ENCODE measurements at regions of chr2 and their contacts with region 1.

Region 1: GRCh38 chr2:12048550-12048949 is 302.1 kb downstream of the LPIN1 start:
- DNase-seq: peak; percentile 35
- ATAC-seq: peak; percentile 95
- H3K4me3 Mint-ChIP-seq: no peak overlapping the region
- H3K27ac Mint-ChIP-seq: no peak overlapping the region
- H3K4me1 Mint-ChIP-seq: peaks cover 16% of the 10 kb centered on the region
- H3K27me3 Mint-ChIP-seq: no peaks in the 10 kb centered on the region
- CTCF ChIP-seq: no peak

Region 2: DNA sequence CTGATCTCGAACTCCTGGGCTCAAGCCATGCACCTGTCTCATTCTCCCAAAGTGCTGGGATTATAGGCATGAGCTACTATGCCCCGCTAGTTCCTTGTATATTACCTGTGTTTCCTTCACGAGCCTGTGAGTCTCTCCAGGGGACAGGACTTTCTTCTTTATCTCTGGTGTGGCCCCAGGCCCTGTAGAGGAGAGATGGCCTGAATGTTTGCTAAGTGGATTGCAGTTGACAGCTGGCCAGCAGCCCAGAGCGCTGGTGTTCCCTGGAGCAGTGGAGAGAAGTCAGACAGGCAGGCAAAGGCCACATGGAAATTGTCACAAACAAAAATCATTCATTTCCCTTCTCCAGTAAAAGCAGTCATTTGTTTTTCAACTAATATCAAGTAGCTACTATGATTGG is 284.2 kb before region 1 on chr2:
- CTCF ChIA-PET with region 1: no interaction called
- POLR2A ChIA-PET with region 1: no interaction called
- DNase-seq: no peak
- ATAC-seq: no peak
- H3K4me3 Mint-ChIP-seq: no peak overlapping the region
- H3K27ac Mint-ChIP-seq: 0 out of 2 replicates have a peak overlapping the region, but pooled peaks have one; percentile 27
- H3K4me1 Mint-ChIP-seq: peaks cover 19% of the 10 kb centered on the region
- H3K27me3 Mint-ChIP-seq: no peaks in the 10 kb centered on the region
- CTCF ChIP-seq: no peak

Region 3: GRCh38 chr2:11863513-11864328 is 184.8 kb before region 1 on chr2:
- CTCF ChIA-PET with region 1: interaction called, 16 read pairs
- POLR2A ChIA-PET with region 1: no interaction called
- DNase-seq: peak; percentile 86
- ATAC-seq: peak; percentile 94
- H3K4me3 Mint-ChIP-seq: no peak overlapping the region
- H3K27ac Mint-ChIP-seq: no peak overlapping the region; the same call in 1 of the 2 replicates
- H3K4me1 Mint-ChIP-seq: peaks cover 28% of the 10 kb centered on the region
- H3K27me3 Mint-ChIP-seq: no peaks in the 10 kb centered on the region; the same call in 1 of the 2 replicates
- CTCF ChIP-seq: peak; percentile 92

Region 4: DNA sequence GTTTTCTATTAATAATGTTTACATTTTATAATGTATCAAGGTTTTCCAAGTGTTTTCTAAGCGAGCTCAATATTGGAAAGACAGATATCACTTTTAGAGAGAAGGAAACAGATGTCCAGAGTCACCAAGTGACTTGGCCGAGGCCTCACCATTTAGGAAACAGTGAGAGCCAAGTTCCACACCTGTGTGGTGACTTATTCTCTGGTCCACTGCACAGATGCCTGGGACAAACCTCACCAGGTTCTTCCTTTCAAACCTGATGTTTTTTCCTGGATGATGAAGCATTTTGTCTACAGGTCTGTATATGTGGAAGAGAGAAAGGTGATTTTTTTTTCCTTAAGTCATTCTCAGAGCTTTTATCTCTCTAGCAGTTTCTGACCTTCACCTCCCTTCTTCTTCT is 21.4 kb before region 1 on chr2:
- CTCF ChIA-PET with region 1: no interaction called
- POLR2A ChIA-PET with region 1: no interaction called
- DNase-seq: no peak
- ATAC-seq: no peak
- H3K4me3 Mint-ChIP-seq: no peak overlapping the region
- H3K27ac Mint-ChIP-seq: no peak overlapping the region
- H3K4me1 Mint-ChIP-seq: peaks cover 14% of the 10 kb centered on the region
- H3K27me3 Mint-ChIP-seq: no peaks in the 10 kb centered on the region
- CTCF ChIP-seq: no peak

Region 5: DNA sequence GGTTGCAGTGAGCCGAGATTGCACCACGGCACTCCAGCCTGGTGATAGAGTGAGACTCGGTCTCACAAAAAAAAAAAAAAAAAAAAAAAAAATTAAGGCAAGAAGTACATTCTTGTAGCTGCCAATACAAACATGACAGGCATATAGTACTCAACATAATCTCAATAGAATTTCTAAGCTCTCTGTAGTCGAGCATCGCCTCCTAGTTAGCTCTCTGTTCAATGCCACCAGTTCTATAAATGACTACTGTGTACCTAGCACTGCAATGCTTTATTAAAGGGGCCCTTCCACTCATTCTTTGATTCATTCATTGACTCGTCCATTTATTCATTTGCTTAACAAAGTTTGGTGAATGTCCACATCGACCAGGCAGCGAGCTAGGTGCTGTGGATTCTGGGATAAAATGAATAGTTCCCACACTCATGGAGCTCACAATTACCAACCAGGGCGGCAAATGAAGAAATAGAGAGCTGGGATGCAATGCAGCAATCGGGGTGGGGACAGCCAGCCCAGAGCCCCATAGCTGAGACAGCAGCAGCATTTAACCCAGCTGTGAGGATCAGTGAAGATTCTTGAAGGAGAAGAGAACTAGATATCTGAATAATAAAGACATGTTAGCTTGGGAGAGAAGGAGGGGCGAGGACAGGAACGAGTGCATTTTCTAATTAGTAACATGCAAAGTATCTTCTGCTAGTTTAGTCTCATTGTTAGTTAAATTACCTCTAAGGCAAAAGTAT is 47.7 kb after region 1 on chr2:
- CTCF ChIA-PET with region 1: interaction called, 11 read pairs
- POLR2A ChIA-PET with region 1: no interaction called
- DNase-seq: peak; percentile 28
- ATAC-seq: peak; percentile 95
- H3K4me3 Mint-ChIP-seq: peak overlapping the region; percentile 51
- H3K27ac Mint-ChIP-seq: peak overlapping the region; percentile 96
- H3K4me1 Mint-ChIP-seq: peaks cover 50% of the 10 kb centered on the region
- H3K27me3 Mint-ChIP-seq: no peaks in the 10 kb centered on the region
- CTCF ChIP-seq: no peak

Region 6: DNA sequence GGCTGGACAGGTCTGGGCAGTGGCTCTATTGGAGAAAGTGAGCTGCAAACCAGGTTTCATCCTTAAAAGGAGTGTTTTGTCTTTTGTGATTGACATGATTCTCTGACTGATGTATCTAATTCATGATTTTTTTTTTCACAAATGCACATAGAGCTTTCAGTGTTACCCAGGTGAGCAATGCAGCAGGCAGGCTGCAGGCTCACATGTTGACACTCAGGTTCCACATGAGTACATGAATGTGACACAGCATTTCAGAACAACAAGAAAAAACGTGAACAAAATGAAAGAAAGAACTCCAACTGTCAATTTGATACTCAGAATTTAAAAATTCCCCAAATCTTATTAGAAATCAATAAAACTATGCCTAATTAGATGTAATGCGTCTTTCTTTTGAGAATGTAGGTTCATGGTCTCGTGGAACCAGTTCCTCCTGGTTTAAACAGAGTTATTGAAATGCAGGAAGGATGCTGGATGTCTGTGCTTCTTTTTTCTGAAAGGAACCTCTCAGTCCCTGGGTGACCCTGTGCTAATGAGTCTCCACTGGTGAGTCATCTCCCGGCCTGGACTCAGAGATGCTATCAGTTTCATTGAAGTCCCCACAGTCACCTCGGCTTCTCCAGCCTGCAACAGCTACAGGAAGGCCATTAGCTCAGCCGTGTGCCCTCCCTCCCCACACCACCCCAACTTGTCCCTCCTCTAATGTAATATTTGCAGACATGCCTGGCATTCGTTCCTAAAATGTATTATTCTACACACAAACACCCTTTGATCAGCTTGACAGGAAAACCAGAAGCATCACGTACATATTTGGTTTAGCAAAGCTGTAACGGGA is 128.3 kb after region 1 on chr2:
- CTCF ChIA-PET with region 1: no interaction called
- POLR2A ChIA-PET with region 1: no interaction called
- DNase-seq: no peak
- ATAC-seq: no peak; the same call in 1 of the 2 replicates
- H3K4me3 Mint-ChIP-seq: no peak overlapping the region
- H3K27ac Mint-ChIP-seq: no peak overlapping the region
- H3K4me1 Mint-ChIP-seq: peaks cover 17% of the 10 kb centered on the region
- H3K27me3 Mint-ChIP-seq: no peaks in the 10 kb centered on the region; the same call in 1 of the 2 replicates
- CTCF ChIP-seq: no peak